Common myeloid progenitor, CD34-positive (primary cell): ENCODE measurements at regions of chr3 and their contacts with region 1.

Region 1: GRCh38 chr3:8324740-8325139 is 176.9 kb upstream of the LMCD1 start:
- DNase-seq: peak; percentile 52 to 76 (median 72)
- H3K4me3 ChIP-seq: no peak overlapping the region
- H3K27ac ChIP-seq: no peak overlapping the region
- H3K4me1 ChIP-seq: peaks cover 0 to 10% (median 6%) of the 10 kb centered on the region in 4 experiments
- H3K27me3 ChIP-seq: no peaks in the 10 kb centered on the region

Region 2: GRCh38 chr3:8301728-8302462 is 22.8 kb before region 1 on chr3:
- CTCF ChIA-PET with region 1: interaction called, 21 read pairs
- POLR2A ChIA-PET with region 1: no interaction called
- DNase-seq: peak; percentile 64 to 86 (median 82)
- H3K4me3 ChIP-seq: no peak overlapping the region
- H3K27ac ChIP-seq: no peak overlapping the region
- H3K4me1 ChIP-seq: peaks cover 0 to 3% (median 0%) of the 10 kb centered on the region in 4 experiments
- H3K27me3 ChIP-seq: no peaks in the 10 kb centered on the region

Region 3: DNA sequence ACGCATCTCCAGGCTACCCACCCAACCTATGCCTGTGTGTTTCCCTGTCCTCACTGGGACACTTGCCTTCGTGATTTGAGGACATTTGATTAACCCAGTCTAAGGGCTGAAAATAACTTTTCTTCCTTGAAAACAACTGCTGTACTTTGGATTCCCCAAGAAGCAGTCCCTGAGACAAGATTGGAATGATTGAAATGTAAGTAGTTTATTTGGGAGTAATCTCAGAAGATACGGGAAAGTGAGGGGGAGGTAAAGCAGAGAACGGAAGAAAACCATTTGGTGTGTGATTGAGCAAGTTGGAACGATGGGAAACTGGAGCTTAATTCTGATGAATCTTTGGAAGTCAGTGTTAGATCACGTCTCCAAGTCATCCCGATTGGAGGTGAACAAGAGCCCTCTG is 33.1 kb after region 1 on chr3:
- CTCF ChIA-PET with region 1: interaction called, 15 read pairs
- POLR2A ChIA-PET with region 1: interaction called, 5 read pairs
- DNase-seq: no peak
- H3K4me3 ChIP-seq: peak overlapping the region in 2 of 7 experiments; percentile 38 to 48
- H3K27ac ChIP-seq: peak overlapping the region; percentile 46 to 81
- H3K4me1 ChIP-seq: peaks cover 15 to 39% (median 32%) of the 10 kb centered on the region in 4 experiments
- H3K27me3 ChIP-seq: no peaks in the 10 kb centered on the region

Region 4: GRCh38 chr3:8416965-8417364 is 92.2 kb after region 1 on chr3:
- CTCF ChIA-PET with region 1: interaction called, 204 read pairs
- POLR2A ChIA-PET with region 1: interaction called, 7 read pairs
- DNase-seq: peak; percentile 1 to 8 (median 3)
- H3K4me3 ChIP-seq: no peak overlapping the region
- H3K27ac ChIP-seq: no peak overlapping the region
- H3K4me1 ChIP-seq: peaks cover 0 to 2% (median 0%) of the 10 kb centered on the region in 4 experiments
- H3K27me3 ChIP-seq: no peaks in the 10 kb centered on the region